ENCODE measurements at regions of chr13 and their contacts with region 1.

Region 1: DNA sequence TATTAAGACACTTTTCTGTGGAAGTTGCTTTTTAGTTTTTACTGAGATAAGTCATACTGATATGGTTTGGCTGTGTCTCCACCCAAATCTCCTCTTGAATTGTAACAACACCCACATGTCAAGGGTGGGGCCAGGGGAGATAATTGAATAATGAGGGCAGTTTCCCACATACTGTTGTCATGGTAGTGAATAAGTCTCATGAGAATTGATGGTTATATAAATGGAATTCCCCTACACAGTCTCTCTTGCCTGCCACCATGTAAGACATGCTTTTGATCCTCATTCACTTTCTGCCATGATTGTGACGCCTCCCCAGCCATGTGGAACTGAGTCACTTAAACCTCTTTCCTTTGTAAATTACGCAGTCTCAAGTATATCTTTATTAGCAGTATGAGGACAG is 1340.4 kb downstream of the SLITRK5 start:
- DNase-seq: no peak
- H3K4me3 ChIP-seq: no peak overlapping the region
- H3K27ac ChIP-seq: no peak overlapping the region
- H3K4me1 ChIP-seq: no peaks in the 10 kb centered on the region
- CTCF ChIP-seq: no peak

Region 2: DNA sequence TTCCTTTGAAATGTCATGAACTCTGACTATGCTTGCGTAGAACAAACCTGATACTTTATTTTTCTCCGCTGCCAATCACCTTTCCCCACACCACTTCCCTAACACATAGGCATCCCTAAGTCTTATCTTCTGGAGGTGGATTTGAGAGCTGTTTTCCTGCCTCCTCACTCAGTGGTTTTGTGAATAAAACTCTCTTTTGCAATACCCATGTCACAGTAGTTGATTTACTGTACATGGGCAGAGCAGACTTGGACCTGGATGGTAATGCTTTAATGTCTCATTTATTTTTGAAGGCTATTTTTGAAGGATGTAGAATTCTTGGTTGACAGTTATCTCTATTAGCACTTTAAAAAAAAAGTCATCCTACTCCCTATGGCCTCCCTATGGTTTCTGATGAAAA is 458.6 kb before region 1 on chr13:
- CTCF ChIA-PET with region 1: no interaction called
- POLR2A ChIA-PET with region 1: interaction called, 13 read pairs
- intact Hi-C with region 1: no loop called
- DNase-seq: no peak
- H3K4me3 ChIP-seq: no peak overlapping the region
- H3K27ac ChIP-seq: no peak overlapping the region
- H3K4me1 ChIP-seq: no peaks in the 10 kb centered on the region
- CTCF ChIP-seq: no peak

Region 3: GRCh38 chr13:88926890-88927502 is 84.6 kb before region 1 on chr13:
- CTCF ChIA-PET with region 1: no interaction called
- POLR2A ChIA-PET with region 1: no interaction called
- intact Hi-C with region 1: no loop called
- DNase-seq: no peak
- H3K4me3 ChIP-seq: no peak overlapping the region
- H3K27ac ChIP-seq: no peak overlapping the region
- H3K4me1 ChIP-seq: no peaks in the 10 kb centered on the region
- CTCF ChIP-seq: no peak

Measured in OCI-LY7 (cell line).